ENCODE measurements at regions of chr2 and their contacts with region 1.

Region 1: GRCh38 chr2:213251618-213252017 is 32.6 kb upstream of the SPAG16 start:
- DNase-seq: peak; percentile 87
- H3K4me3 ChIP-seq: no peak overlapping the region
- H3K27ac ChIP-seq: no peak overlapping the region
- H3K4me1 ChIP-seq: peaks cover 22% of the 10 kb centered on the region
- H3K27me3 ChIP-seq: no peaks in the 10 kb centered on the region
- CTCF ChIP-seq: peak; percentile 65

Region 2: DNA sequence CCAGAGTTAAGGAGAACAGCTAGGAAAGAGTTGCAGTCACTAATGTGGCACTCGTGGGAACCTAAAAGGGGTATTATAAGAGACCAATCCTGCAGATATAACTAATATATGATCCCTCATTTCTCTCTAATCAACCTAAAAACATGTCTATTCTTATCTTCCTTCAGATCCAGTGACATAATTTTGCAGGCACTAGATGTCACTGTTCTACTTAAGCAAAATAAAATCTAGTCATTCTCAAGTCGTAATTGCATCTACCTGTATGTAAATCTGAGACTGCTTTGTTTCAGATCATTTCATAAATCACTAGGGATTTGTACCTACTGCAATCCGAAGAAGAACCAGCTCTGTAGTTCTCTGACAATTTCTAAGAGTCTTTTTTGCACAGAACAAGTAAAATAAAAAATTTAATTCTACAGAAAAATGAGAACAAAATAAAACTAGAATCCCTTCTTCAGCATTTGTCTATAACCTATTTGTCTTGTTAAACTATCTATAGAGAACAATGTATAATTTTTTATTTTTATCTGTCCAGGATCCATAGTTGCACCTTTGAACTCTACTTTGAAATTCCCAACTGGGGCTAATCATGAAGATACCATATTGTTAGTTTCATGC is 656.5 kb before region 1 on chr2:
- CTCF ChIA-PET with region 1: no interaction called
- POLR2A ChIA-PET with region 1: no interaction called
- intact Hi-C with region 1: loop called (anchors 5 kb)
- DNase-seq: peak; percentile 50
- H3K4me3 ChIP-seq: no peak overlapping the region
- H3K27ac ChIP-seq: no peak overlapping the region
- H3K4me1 ChIP-seq: peaks cover 9% of the 10 kb centered on the region
- H3K27me3 ChIP-seq: no peaks in the 10 kb centered on the region
- CTCF ChIP-seq: peak; percentile 68

Region 3: GRCh38 chr2:212863185-212863588 is 388.4 kb before region 1 on chr2:
- CTCF ChIA-PET with region 1: no interaction called
- POLR2A ChIA-PET with region 1: no interaction called
- intact Hi-C with region 1: loop called (anchors 5 kb)
- DNase-seq: peak; percentile 79
- H3K4me3 ChIP-seq: no peak overlapping the region
- H3K27ac ChIP-seq: no peak overlapping the region
- H3K4me1 ChIP-seq: no peaks in the 10 kb centered on the region
- H3K27me3 ChIP-seq: no peaks in the 10 kb centered on the region
- CTCF ChIP-seq: peak; percentile 68

Region 4: DNA sequence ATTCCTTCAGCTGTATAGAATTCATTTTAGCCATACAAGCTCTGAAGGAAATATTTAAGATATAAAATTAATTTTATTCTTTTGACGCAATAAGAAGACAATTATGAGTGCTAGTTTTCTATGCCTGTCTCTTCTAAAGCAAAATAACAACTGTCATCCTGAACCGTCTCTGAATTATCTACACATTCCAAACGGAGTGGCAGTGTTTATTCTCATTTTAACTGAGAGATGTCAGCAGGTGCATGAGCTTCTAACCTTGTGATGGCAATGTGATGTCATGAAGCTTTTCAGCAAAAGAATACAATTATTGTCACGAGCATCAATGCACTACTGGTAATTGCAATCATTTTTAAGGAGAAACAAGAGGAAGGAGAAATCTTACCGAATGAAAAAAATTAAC is 307.4 kb after region 1 on chr2:
- CTCF ChIA-PET with region 1: no interaction called
- POLR2A ChIA-PET with region 1: no interaction called
- intact Hi-C with region 1: no loop called
- DNase-seq: no peak
- H3K4me3 ChIP-seq: no peak overlapping the region
- H3K27ac ChIP-seq: no peak overlapping the region
- H3K4me1 ChIP-seq: no peaks in the 10 kb centered on the region
- H3K27me3 ChIP-seq: no peaks in the 10 kb centered on the region
- CTCF ChIP-seq: no peak

Region 5: GRCh38 chr2:213934560-213934959 is 682.9 kb after region 1 on chr2:
- CTCF ChIA-PET with region 1: no interaction called
- POLR2A ChIA-PET with region 1: no interaction called
- intact Hi-C with region 1: loop called (anchors 5 kb)
- DNase-seq: peak; percentile 42
- H3K4me3 ChIP-seq: no peak overlapping the region
- H3K27ac ChIP-seq: no peak overlapping the region
- H3K4me1 ChIP-seq: no peaks in the 10 kb centered on the region
- H3K27me3 ChIP-seq: no peaks in the 10 kb centered on the region
- CTCF ChIP-seq: peak; percentile 63